HepG2 (cell line): ENCODE measurements at regions of chr2 and their contacts with region 1.

Region 1: GRCh38 chr2:67215214-67216055 is 181.7 kb upstream of the ETAA1 start:
- DNase-seq: peak; percentile 35
- ATAC-seq: peak; percentile 99
- H3K4me3 ChIP-seq: no peak overlapping the region
- H3K27ac ChIP-seq: no peak overlapping the region
- H3K4me1 ChIP-seq: no peaks in the 10 kb centered on the region
- H3K27me3 ChIP-seq: no peaks in the 10 kb centered on the region
- CTCF ChIP-seq: peak; percentile 85
- EP300 ChIP-seq: no peak
- POLR2A ChIP-seq: no peak
- RAD21 ChIP-seq: peak; percentile 89

Region 2: DNA sequence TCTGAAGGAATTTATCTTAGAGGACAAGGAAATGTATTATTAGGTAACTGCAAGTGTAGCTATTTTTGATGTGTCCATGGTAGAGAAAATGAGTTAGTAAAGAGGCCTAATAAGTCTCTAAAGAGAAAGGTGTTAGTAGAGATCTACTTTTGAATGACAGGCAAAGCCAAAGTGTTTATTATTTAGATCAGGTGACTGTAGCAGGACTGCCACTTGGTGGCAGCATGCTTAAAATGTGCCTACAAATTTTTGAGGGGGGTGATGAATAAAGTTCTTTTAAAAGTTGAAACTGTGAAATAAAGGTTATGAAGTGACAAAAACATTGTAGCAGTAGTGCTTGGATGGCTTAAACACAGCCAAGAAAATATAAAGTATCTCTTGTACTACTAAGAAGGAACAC is 1202.0 kb before region 1 on chr2:
- CTCF ChIA-PET with region 1: no interaction called
- POLR2A ChIA-PET with region 1: no interaction called
- in situ Hi-C with region 1: no loop called
- intact Hi-C with region 1: loop called (anchors 2 kb)
- DNase-seq: peak; percentile 20
- ATAC-seq: no peak
- H3K4me3 ChIP-seq: no peak overlapping the region
- H3K27ac ChIP-seq: no peak overlapping the region
- H3K4me1 ChIP-seq: no peaks in the 10 kb centered on the region
- H3K27me3 ChIP-seq: no peaks in the 10 kb centered on the region
- CTCF ChIP-seq: peak; percentile 32; the same call in 1 of the 2 replicates
- EP300 ChIP-seq: no peak
- POLR2A ChIP-seq: no peak
- RAD21 ChIP-seq: no peak

Region 3: DNA sequence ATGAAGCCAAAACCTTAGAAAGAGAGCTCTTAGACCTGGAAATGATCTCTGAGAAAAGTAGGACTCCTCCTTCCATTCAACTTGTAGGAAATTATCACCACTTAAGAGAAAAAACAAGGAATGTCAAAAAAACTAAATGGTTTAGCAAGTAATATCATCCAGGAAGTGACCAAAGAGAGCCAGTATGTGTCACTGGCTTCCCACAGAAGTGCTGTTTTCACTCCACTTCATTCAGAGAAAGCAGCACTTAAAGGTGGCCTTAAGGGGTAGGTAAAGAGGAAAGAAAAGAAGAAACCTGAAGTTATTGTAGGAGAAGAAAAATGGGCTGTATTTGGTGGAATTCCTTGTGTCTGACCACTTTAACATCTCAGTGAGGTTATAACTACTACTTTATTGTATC is 232.7 kb before region 1 on chr2:
- CTCF ChIA-PET with region 1: no interaction called
- POLR2A ChIA-PET with region 1: no interaction called
- in situ Hi-C with region 1: no loop called
- intact Hi-C with region 1: loop called (anchors 2 kb)
- DNase-seq: no peak
- ATAC-seq: no peak
- H3K4me3 ChIP-seq: no peak overlapping the region
- H3K27ac ChIP-seq: no peak overlapping the region
- H3K4me1 ChIP-seq: no peaks in the 10 kb centered on the region
- H3K27me3 ChIP-seq: no peaks in the 10 kb centered on the region
- CTCF ChIP-seq: peak; percentile 21; the same call in 1 of the 2 replicates
- EP300 ChIP-seq: no peak
- POLR2A ChIP-seq: no peak
- RAD21 ChIP-seq: no peak

Region 4: DNA sequence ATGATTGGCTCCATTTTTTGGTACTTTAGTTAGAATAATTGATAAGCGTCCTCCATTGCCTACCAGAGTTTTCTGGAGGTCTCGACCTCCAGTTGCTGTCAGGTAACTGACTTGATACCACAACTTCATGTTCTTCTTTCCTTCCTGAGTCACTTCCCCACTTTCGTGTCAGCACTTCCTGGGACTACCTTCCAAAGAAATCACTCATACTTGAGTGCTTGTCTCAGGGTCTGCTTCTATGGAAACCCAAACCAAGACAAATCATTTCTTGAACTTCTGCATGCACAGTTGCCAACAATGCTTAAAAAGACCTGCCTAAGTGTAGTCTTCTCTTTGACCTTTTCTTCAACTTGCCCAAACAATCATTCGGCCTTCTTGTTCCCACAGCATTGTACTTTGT is 28.6 kb before region 1 on chr2:
- CTCF ChIA-PET with region 1: no interaction called
- POLR2A ChIA-PET with region 1: no interaction called
- in situ Hi-C with region 1: no loop called
- intact Hi-C with region 1: no loop called
- DNase-seq: no peak
- ATAC-seq: no peak
- H3K4me3 ChIP-seq: no peak overlapping the region
- H3K27ac ChIP-seq: no peak overlapping the region
- H3K4me1 ChIP-seq: no peaks in the 10 kb centered on the region
- H3K27me3 ChIP-seq: no peaks in the 10 kb centered on the region
- CTCF ChIP-seq: no peak
- EP300 ChIP-seq: no peak
- POLR2A ChIP-seq: no peak
- RAD21 ChIP-seq: no peak

Region 5: GRCh38 chr2:67277450-67277849 is 62.0 kb after region 1 on chr2:
- CTCF ChIA-PET with region 1: no interaction called
- POLR2A ChIA-PET with region 1: no interaction called
- in situ Hi-C with region 1: no loop called
- intact Hi-C with region 1: no loop called
- DNase-seq: peak; percentile 13
- ATAC-seq: peak; percentile 77
- H3K4me3 ChIP-seq: no peak overlapping the region
- H3K27ac ChIP-seq: no peak overlapping the region
- H3K4me1 ChIP-seq: no peaks in the 10 kb centered on the region
- H3K27me3 ChIP-seq: no peaks in the 10 kb centered on the region
- CTCF ChIP-seq: peak; percentile 59
- EP300 ChIP-seq: no peak
- POLR2A ChIP-seq: no peak
- RAD21 ChIP-seq: no peak